Posterior vena cava (tissue), 2 donors: ENCODE measurements at regions of chrX and their contacts with region 1.

Region 1: DNA sequence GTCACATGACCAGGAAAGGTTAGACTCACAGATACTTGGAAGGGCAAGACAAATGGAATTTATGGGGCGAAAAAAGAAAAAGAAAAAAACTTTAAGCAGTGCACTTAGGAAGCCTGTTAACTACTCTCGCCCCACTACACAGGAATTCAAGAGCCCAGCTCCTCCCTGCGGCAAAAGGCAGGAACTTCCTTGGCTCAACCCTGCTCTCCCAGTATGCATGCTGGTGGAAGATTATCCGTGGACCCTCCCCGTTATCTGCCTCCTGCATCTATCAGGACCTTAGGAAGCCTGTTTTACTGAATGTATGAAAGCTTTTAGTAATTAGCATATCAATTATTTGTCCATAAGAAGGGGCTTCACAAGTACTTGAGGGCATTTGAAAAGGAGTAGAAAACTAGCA is 40.1 kb upstream of the RPA4 start:
- DNase-seq: no peak

Region 2: DNA sequence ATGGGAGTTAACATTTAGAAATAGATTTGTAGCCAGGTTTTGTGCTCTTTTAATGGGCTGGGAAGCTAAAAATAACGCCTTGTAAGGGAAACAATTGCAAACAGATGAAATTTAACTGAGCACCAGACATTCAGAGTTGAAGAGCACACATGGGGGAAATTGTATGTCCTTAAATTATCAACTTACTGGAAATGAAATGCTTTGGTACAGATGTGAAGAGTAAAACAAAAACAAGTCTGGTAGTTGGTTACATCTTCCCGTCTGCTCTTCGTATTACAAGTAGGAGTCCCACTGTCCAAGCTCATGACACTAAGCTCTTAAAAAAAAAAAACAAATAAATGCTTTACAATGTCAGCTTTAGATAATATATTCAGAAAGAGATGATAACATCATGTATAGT is 19.4 kb before region 1 on chrX:
- intact Hi-C with region 1: loop called in 1 of 2 experiments (anchors 1 kb)
- DNase-seq: no peak

Region 3: GRCh38 chrX:97452283-97452682 is 608.7 kb after region 1 on chrX:
- intact Hi-C with region 1: no loop called
- DNase-seq: no peak